PC-3 (cell line): ENCODE measurements at regions of chr3 and their contacts with region 1.

Region 1: DNA sequence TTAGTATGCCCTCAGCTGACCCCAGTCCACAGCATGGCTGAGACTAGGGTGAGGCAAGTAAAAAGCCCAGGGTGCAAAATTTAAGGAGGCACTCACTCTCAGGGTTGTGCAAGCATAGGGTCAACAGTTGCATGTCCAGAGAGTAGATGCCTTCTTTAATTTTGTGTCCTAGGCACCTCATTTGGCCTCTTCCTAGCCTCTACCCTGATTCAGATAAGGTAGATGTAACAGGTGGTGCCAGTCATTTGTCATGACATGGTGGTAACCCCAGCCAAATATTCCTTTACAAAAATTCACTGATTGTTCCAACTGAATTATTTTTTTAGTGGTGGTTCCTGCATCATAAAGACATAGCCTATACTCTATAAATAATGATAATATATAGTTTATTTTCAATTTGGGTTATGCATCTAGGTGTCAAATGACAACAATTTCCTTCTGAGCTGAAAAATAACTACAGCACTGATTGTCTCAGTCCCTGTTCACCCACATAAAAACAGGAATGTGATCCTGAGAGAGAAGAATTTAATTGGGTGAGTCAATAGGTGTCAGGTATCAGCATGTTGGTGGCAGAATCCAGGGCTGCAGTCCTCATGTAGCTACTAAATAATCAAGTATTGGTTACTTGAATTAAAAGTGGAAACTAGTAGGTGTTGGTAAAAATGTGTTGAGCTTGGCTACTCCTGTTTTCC is 44.2 kb upstream of the TIPARP start:
- DNase-seq: peak; percentile 84
- ATAC-seq: peak; percentile 90
- H3K4me3 ChIP-seq: peak overlapping the region; percentile 5; the same call in 1 of the 2 replicates
- H3K27ac ChIP-seq: peak overlapping the region; percentile 52
- H3K4me1 ChIP-seq: peaks cover 54% of the 10 kb centered on the region
- H3K27me3 ChIP-seq: no peaks in the 10 kb centered on the region
- CTCF ChIP-seq: no peak

Region 2: DNA sequence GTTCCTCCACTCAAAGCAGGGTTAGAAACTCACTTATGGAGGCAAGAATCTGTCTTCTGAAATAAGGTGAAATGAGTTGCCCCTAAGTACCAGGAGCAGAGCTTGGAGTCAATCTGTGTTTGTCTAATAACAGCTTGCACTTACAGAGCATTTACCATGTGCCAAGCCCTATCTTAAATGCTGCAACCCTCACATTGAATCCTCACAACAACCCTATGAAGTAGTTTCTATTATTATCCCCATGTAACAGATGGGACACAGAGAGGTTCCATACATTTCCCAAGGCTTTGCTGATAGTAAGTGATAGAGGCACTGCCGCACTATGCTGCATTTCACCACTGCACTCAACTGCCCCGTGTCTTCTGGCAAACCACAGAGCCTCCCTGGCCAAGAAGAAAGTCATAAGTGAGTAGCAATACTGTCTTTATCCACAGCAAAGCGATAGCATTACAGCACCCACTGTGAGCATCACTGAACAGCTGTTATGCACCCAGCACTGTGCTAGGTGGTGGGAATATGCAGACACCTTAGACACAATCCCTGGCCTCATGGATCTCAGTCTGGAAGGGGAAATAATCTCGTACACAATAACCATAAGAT is 216.8 kb before region 1 on chr3:
- CTCF ChIA-PET with region 1: no interaction called
- POLR2A ChIA-PET with region 1: no interaction called
- intact Hi-C with region 1: no loop called
- DNase-seq: no peak
- ATAC-seq: no peak
- H3K4me3 ChIP-seq: no peak overlapping the region
- H3K27ac ChIP-seq: no peak overlapping the region
- H3K4me1 ChIP-seq: peaks cover 16% of the 10 kb centered on the region
- H3K27me3 ChIP-seq: peaks cover 18% of the 10 kb centered on the region; the same call in 1 of the 2 replicates
- CTCF ChIP-seq: no peak

Region 3: DNA sequence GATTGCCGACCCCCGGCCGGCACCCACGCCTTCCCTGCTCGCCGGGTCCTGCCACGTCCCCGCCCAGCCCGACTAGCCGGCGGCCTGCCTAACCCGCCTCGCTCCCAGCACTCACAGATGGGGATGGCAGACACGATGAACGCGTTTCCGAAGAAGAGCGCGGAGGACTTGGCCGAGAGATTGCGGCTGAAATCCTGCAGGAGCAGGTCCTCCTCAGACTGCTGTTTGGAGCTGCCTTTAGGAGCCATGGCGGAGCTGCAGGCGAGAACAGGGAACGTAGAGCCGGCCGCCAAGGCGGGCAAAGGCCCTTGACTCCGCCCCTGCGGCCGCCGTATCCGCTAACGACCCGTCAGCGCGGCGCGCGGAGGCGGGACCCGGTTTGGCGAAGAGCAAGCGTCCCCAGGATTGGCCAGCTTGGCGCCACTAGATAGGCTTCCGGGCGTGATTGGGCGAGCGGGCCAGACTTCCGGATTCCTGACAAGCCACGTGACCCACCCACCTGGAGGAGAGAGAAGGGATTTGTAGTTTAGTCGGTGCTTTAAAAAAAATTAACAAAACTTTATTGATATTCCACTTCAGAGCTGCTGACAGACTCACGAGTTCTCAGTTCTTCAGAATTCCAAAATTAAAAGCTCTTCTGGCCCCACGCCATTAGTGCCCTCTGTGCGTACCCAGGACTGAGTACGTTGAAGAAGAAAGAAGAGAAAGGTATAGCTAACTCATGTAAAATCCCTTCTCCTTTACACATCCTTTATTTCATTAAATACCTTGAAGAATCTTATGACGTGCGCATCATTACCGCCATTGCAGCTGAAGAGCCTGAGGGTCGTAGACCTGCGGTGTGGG is 75.2 kb before region 1 on chr3 and contains the start of gene SSR3:
- CTCF ChIA-PET with region 1: no interaction called
- POLR2A ChIA-PET with region 1: interaction called, 4 read pairs
- intact Hi-C with region 1: loop called (anchors 2 kb)
- DNase-seq: peak; percentile 99
- ATAC-seq: peak; percentile 99
- H3K4me3 ChIP-seq: peak within 1 kb of the TSS; percentile 96
- H3K27ac ChIP-seq: peak within 1 kb of the TSS; percentile 54
- H3K4me1 ChIP-seq: peaks cover 36% of the 10 kb centered on the region
- H3K27me3 ChIP-seq: no peaks in the 10 kb centered on the region
- CTCF ChIP-seq: no peak
- total RNA-seq, gene SSR3: 171 and 178 TPM in 2 replicates

Region 4: GRCh38 chr3:156582784-156583183 is 47.4 kb before region 1 on chr3:
- CTCF ChIA-PET with region 1: no interaction called
- POLR2A ChIA-PET with region 1: no interaction called
- intact Hi-C with region 1: no loop called
- DNase-seq: no peak
- ATAC-seq: no peak
- H3K4me3 ChIP-seq: no peak overlapping the region
- H3K27ac ChIP-seq: no peak overlapping the region
- H3K4me1 ChIP-seq: no peaks in the 10 kb centered on the region; the same call in 1 of the 2 replicates
- H3K27me3 ChIP-seq: no peaks in the 10 kb centered on the region
- CTCF ChIP-seq: no peak

Region 5: GRCh38 chr3:156668073-156668763 is 38.0 kb after region 1 on chr3:
- CTCF ChIA-PET with region 1: no interaction called
- POLR2A ChIA-PET with region 1: no interaction called
- intact Hi-C with region 1: loop called (anchors 1 kb)
- DNase-seq: peak; percentile 32
- ATAC-seq: peak; percentile 89
- H3K4me3 ChIP-seq: no peak overlapping the region
- H3K27ac ChIP-seq: no peak overlapping the region
- H3K4me1 ChIP-seq: peaks cover 21% of the 10 kb centered on the region
- H3K27me3 ChIP-seq: no peaks in the 10 kb centered on the region
- CTCF ChIP-seq: no peak

Region 6: DNA sequence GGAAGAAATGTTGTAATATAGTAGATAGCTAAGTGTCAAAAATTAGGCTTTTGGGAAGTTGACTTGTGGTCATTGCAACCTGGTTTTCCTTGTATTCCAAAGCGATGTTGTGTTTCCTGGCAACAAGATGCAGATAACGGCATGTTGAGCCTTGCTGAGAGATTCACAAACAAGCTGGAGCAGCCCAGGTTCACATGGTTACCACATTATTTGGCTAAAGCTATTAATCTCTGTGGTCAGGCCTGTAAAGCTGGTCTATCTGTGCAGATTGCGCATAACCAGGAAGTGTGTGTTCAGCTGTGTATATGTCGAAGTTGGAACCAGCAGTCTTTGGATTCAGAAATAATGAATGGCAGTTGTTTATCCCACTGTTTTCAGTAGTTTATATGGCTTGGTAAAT is 50.8 kb after region 1 on chr3:
- CTCF ChIA-PET with region 1: no interaction called
- POLR2A ChIA-PET with region 1: no interaction called
- intact Hi-C with region 1: no loop called
- DNase-seq: peak; percentile 88
- ATAC-seq: peak; percentile 54
- H3K4me3 ChIP-seq: peak overlapping the region; percentile 3; the same call in 1 of the 2 replicates
- H3K27ac ChIP-seq: peak overlapping the region; percentile 23; the same call in 1 of the 2 replicates
- H3K4me1 ChIP-seq: peaks cover 94% of the 10 kb centered on the region
- H3K27me3 ChIP-seq: no peaks in the 10 kb centered on the region
- CTCF ChIP-seq: no peak